H1 (cell line): ENCODE measurements at regions of chr11 and their contacts with region 1.

Region 1: DNA sequence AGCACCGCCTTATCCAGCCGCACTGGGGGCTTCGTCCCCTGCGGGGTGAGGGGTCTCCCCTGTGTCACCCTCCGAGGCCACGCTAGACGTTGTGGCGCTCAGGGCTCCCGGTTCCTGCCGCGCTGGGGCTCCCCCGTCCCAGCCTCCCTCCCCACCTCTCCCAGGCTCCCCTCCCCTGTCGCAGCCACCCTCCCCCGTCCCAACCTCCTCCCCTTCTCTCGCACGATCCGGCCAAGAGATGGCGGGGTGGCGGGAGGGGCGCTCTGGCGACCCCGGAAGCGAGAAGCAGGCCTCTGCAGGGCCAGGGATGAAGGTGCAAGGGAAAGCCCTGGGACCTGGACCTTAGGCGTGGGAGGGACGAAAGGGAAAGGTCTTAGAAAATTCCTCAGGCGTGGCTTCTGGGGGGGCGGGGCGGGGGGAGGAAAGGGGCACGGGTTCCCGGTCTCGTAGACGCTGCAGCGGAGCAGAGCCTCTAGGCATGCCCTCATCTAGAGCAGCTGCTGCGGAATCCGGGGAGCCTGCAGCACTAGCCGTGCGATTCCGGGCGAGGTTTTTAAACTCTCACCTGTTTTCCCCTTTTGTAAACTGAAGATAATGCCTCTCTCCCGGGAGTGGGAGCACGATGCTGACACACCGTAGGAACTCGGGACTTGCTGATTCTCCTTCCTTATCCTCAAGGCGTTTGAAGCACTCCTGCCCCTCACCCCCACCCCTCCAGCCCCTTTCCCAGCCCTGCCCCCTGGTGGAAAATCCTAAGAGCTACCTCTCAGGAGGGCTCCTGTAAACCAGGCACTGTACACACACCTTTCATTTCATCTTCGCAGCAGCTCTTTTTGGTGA is 14.4 kb downstream of the KCNJ5 start:
- DNase-seq: peak in 1 of 2 experiments; percentile 80
- H3K4me3 ChIP-seq: peak overlapping the region; percentile 49 to 68 (median 54)
- H3K27ac ChIP-seq: no peak overlapping the region
- H3K4me1 ChIP-seq: peaks cover 11 to 30% (median 23%) of the 10 kb centered on the region in 4 experiments
- H3K27me3 ChIP-seq: peaks cover 45 to 67% (median 61%) of the 10 kb centered on the region in 4 experiments
- CTCF ChIP-seq: peak; percentile 44 to 58 (median 48)
- EP300 ChIP-seq: no peak
- POLR2A ChIP-seq: no peak
- RAD21 ChIP-seq: peak; percentile 25 to 39; a peak in 2 of 4 replicates

Region 2: DNA sequence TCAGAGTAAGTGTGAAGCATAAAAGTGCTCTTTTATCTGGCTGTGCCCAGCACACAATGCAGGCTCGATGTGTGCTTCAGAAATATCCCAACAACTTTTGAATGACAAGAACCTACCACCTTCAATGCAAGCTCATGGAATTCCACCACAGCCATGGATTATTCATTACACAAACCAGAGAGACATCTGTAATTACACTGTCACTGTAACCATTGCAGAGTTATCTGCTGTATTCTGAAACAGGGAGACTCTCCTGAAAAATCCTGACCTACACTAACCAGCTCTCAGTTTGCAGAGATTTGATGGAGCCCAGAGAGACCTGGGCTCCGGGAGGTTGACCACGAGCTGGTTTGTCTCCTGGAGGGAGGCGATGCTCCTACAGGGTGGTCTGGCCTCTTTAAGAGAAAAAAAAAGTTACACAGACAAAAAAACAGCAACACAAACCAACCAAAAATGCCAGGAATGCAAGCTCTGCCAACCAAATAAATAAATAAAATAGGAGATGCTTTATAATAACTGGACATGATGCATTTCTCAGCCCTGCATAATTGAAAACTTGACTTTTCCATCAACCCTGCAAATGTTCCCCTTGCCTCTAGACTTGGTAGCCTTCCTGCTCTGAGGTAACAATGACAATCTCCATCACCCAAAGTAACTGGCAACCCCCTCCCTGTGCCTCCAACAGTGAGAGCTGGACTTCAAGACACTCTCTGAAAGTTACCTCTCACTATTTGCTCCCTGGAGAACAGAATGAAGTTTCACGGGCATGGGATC is 387.9 kb before region 1 on chr11:
- CTCF ChIA-PET with region 1: no interaction called
- POLR2A ChIA-PET with region 1: no interaction called
- DNase-seq: no peak
- H3K4me3 ChIP-seq: no peak overlapping the region
- H3K27ac ChIP-seq: no peak overlapping the region
- H3K4me1 ChIP-seq: peaks cover 0 to 2% (median 0%) of the 10 kb centered on the region in 4 experiments; a peak in 3 of 7 replicates
- H3K27me3 ChIP-seq: peaks cover 0 to 19% (median 10%) of the 10 kb centered on the region in 4 experiments; a peak in 6 of 7 replicates
- CTCF ChIP-seq: no peak
- EP300 ChIP-seq: no peak
- POLR2A ChIP-seq: no peak
- RAD21 ChIP-seq: no peak

Region 3: DNA sequence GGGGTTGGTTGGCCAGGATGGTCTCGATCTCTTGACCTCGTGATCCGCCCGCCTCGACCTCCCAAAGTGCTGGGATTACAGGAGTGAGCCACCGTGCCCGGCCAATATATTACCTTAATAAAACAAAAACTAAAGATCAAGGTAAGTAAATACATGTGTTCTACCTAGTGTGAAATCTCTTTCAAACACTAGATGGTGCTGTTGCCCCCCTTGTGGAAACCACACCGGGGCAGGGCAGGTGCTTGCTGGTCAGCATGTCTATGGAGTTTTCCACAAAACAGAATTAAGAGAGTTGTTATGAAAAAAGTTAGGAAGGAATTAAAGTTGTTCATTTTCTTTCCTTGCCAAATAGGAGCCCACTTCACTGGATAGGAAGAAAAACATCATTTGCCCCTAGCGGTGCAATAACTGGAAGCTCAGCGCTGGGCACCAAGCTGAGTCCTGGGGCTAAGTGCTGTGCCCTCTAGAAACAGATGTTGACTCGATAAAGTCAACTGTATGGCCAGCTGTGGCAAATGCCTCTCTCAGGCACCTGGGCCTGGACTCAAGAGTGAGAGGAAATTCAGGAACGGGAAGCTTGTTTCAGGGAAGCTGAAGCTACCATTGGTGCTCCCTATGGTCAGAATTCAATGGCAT is 20.7 kb before region 1 on chr11:
- CTCF ChIA-PET with region 1: interaction called, 332 read pairs
- POLR2A ChIA-PET with region 1: interaction called, 19 read pairs
- DNase-seq: peak in 1 of 2 experiments; percentile 78
- H3K4me3 ChIP-seq: no peak overlapping the region
- H3K27ac ChIP-seq: no peak overlapping the region
- H3K4me1 ChIP-seq: peaks cover 1 to 7% (median 3%) of the 10 kb centered on the region in 4 experiments; a peak in 6 of 7 replicates
- H3K27me3 ChIP-seq: peaks cover 16 to 46% (median 36%) of the 10 kb centered on the region in 4 experiments
- CTCF ChIP-seq: peak; percentile 50 to 79 (median 68)
- EP300 ChIP-seq: no peak
- POLR2A ChIP-seq: no peak
- RAD21 ChIP-seq: peak; percentile 91 to 94

Region 4: GRCh38 chr11:128917144-128917724 is 11.7 kb after region 1 on chr11:
- CTCF ChIA-PET with region 1: interaction called, 23 read pairs
- POLR2A ChIA-PET with region 1: no interaction called
- DNase-seq: no peak
- H3K4me3 ChIP-seq: no peak overlapping the region
- H3K27ac ChIP-seq: no peak overlapping the region
- H3K4me1 ChIP-seq: no peaks in the 10 kb centered on the region; a peak in 1 of 7 replicates
- H3K27me3 ChIP-seq: peaks cover 0 to 3% (median under 1%) of the 10 kb centered on the region in 4 experiments; a peak in 2 of 7 replicates
- CTCF ChIP-seq: no peak
- EP300 ChIP-seq: no peak
- POLR2A ChIP-seq: no peak
- RAD21 ChIP-seq: no peak

Region 5: GRCh38 chr11:128936606-128937251 is 31.2 kb after region 1 on chr11:
- CTCF ChIA-PET with region 1: interaction called, 108 read pairs
- POLR2A ChIA-PET with region 1: no interaction called
- DNase-seq: peak; percentile 39 to 65
- H3K4me3 ChIP-seq: no peak overlapping the region
- H3K27ac ChIP-seq: peak overlapping the region; percentile 46
- H3K4me1 ChIP-seq: peaks cover 0 to 12% (median 9%) of the 10 kb centered on the region in 4 experiments; a peak in 6 of 7 replicates
- H3K27me3 ChIP-seq: peaks cover 0 to 20% (median 10%) of the 10 kb centered on the region in 4 experiments; a peak in 6 of 7 replicates
- CTCF ChIP-seq: peak; percentile 7 to 27 (median 20); a peak in 3 of 4 replicates
- EP300 ChIP-seq: peak in 1 of 2 experiments; percentile 80; a peak in 1 of 3 replicates
- POLR2A ChIP-seq: peak in 1 of 2 experiments; percentile 38; a peak in 1 of 3 replicates
- RAD21 ChIP-seq: peak; percentile 40 to 44; a peak in 3 of 4 replicates

Region 6: DNA sequence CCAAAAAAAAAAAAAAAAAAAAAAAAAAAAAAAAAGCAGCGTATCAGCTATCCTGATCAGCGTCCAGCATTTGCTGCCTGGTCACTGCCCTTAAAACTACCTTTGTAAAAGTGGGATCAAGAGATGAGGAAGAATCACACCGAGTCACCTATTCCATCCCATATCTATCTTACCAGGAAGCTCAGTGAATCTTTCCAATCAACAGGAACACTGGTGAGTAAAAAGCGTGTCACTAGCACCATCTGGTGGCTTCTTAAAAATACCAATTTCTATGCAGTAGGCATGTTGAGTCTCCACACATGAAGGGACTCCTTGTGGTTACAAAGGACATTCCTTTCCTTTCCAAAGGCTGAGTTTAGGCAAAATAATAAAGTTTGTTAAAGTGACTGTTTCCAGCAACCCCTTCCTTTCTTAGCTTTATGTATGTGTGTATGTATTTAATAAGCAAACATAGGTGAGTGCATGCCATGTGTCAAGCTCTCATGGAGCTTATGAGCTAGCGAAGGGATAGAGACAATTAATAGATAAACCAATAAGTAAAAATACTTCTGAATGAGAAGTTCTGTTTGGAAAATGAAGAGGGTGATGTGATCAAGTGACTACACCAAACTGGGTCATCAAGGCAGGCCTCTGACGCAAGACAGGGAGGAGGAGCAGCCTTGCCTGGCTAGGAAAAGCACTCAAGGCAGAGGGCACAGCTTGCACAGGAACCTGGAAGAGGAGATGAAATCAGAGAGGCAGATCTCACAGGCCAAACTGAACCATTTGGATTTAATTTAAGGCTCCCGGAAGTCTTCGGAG is 51.0 kb after region 1 on chr11:
- CTCF ChIA-PET with region 1: interaction called, 30 read pairs
- POLR2A ChIA-PET with region 1: no interaction called
- DNase-seq: no peak
- H3K4me3 ChIP-seq: no peak overlapping the region
- H3K27ac ChIP-seq: no peak overlapping the region
- H3K4me1 ChIP-seq: no peaks in the 10 kb centered on the region
- H3K27me3 ChIP-seq: peaks cover 0 to 2% (median 0%) of the 10 kb centered on the region in 4 experiments; a peak in 2 of 7 replicates
- CTCF ChIP-seq: peak in 2 of 3 experiments; percentile 79 to 86; a peak in 3 of 4 replicates
- EP300 ChIP-seq: no peak
- POLR2A ChIP-seq: no peak
- RAD21 ChIP-seq: peak; percentile 89 to 90

Region 7: GRCh38 chr11:129155745-129156144 is 250.2 kb after region 1 on chr11:
- CTCF ChIA-PET with region 1: no interaction called
- POLR2A ChIA-PET with region 1: no interaction called
- DNase-seq: no peak
- H3K4me3 ChIP-seq: no peak overlapping the region
- H3K27ac ChIP-seq: no peak overlapping the region
- H3K4me1 ChIP-seq: peaks cover 0 to 2% (median 0%) of the 10 kb centered on the region in 4 experiments; a peak in 1 of 7 replicates
- H3K27me3 ChIP-seq: no peaks in the 10 kb centered on the region
- CTCF ChIP-seq: no peak
- EP300 ChIP-seq: no peak
- POLR2A ChIP-seq: no peak
- RAD21 ChIP-seq: no peak

Region 8: GRCh38 chr11:129960216-129961214 is 1055.0 kb after region 1 on chr11:
- CTCF ChIA-PET with region 1: no interaction called
- POLR2A ChIA-PET with region 1: no interaction called
- DNase-seq: no peak
- H3K4me3 ChIP-seq: no peak overlapping the region
- H3K27ac ChIP-seq: no peak overlapping the region
- H3K4me1 ChIP-seq: no peaks in the 10 kb centered on the region
- H3K27me3 ChIP-seq: no peaks in the 10 kb centered on the region; a peak in 1 of 7 replicates
- CTCF ChIP-seq: no peak
- EP300 ChIP-seq: no peak
- POLR2A ChIP-seq: no peak
- RAD21 ChIP-seq: no peak